Tibial artery (tissue), 4 donors: ENCODE measurements at regions of chr16 and their contacts with region 1.

Region 1: GRCh38 chr16:72938795-72939164 is 109.1 kb downstream of the ZFHX3 start:
- DNase-seq: peak; percentile 98 to 99
- H3K4me3 ChIP-seq: peak overlapping the region; percentile 32 to 40
- H3K27ac ChIP-seq: peak overlapping the region; percentile 87 to 88
- H3K4me1 ChIP-seq: peaks cover 4 to 96% (median 57%) of the 10 kb centered on the region in 4 donors
- H3K27me3 ChIP-seq: no peaks in the 10 kb centered on the region
- CTCF ChIP-seq: no peak

Region 2: DNA sequence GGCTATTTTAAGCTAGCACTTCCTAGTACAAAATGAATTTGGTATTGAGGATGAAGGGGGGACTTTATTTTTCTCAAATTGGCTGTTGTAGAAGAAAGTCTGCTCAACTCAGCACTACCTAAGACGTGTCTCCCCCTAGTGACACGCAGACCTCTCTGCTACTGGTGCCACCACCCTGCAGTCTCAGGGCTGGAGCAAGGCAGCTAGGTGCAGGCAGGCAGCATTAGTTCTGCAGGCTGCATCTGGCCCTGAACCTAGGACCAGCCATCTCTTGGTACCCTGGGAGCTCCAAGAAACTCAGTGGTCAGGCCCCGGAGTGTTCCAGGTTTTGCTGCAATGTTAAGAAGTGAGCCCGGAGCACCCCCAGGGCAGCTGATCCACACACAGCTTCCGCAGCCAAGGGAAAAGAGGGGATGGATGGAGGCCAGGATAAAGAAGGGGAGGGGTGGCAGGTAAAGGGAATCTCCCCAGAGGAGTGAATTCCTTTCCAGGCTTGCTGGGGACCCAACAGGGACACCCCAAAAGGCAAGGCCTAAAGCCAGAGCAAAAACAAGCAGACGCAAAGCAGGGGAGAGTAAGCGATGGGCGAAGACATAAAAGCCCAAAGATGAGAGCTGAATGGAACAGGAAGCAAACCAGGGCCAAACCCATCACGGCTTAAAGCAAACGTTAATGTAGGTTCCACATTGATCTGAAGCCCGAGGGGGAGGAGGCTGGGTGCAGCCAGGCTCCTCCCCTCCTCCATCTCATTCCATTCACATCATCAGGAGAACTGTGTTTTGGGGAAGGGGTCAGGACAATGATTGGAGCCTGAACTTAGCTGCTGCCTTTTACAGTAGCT is 91.4 kb before region 1 on chr16:
- intact Hi-C with region 1: loop called (anchors 5 kb)
- DNase-seq: no peak
- H3K4me3 ChIP-seq: peak overlapping the region; percentile 38 to 46
- H3K27ac ChIP-seq: peak overlapping the region; percentile 96 to 99
- H3K4me1 ChIP-seq: peaks cover 0 to 96% (median 74%) of the 10 kb centered on the region in 4 donors
- H3K27me3 ChIP-seq: no peaks in the 10 kb centered on the region
- CTCF ChIP-seq: peak; percentile 37 to 54